IMR-90 (cell line): ENCODE measurements at regions of chr4 and their contacts with region 1.

Region 1: DNA sequence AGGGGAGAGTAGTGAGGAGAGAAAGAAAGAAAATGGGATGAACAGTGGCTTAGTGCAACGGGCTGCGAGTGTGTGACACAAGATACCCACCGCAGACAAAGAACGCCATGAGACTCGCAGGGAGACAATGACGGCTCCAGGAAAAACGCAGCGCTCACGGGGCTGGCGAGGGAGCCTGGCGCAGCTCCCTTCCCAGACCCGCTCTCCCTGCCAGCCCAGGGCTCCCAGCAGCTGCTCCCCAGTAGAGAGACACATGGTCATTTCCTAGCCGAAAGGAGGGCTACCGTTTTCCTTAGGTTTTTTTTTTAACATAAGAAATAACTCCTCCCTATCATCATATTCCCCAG is 149.5 kb downstream of the MAML3 start:
- DNase-seq: peak; percentile 51
- ATAC-seq: peak; percentile 86
- H3K4me3 ChIP-seq: peak overlapping the region; percentile 22
- H3K27ac ChIP-seq: no peak overlapping the region
- H3K4me1 ChIP-seq: peaks cover 2% of the 10 kb centered on the region; the same call in 1 of the 2 replicates
- H3K27me3 ChIP-seq: no peaks in the 10 kb centered on the region
- CTCF ChIP-seq: no peak
- POLR2A ChIP-seq: no peak
- RAD21 ChIP-seq: peak; percentile 16; the same call in 1 of the 2 replicates

Region 2: DNA sequence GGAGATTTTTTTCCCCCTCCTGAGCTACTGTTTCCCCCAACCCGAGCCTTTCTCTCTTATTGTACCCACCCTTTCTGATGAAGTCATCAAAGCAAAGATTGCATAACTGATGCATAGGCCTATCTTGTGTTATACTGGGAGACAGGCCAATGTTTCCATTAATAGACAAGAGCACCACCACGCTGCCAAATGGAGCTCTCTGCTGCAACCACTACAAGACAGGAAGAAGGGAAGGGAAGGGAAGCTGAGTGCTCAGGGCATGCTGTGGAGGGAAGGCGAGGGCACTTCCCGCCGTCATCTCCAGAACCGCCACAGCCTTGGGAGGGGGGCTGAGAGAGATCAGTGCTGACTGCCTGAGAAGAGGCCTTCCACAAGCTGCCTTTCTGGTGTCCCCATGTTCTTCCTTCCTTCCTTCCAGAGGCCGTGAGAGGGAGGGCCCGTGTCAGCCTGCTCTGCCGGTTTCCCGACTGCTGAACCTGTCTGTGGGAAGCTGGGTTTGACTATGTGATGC is 263.9 kb before region 1 on chr4:
- CTCF ChIA-PET with region 1: interaction called, 4 read pairs
- POLR2A ChIA-PET with region 1: no interaction called
- dilution Hi-C with region 1: no loop called
- in situ Hi-C with region 1: loop called (anchors 5 kb)
- intact Hi-C with region 1: no loop called
- DNase-seq: peak; percentile 97
- ATAC-seq: peak; percentile 94
- H3K4me3 ChIP-seq: no peak overlapping the region
- H3K27ac ChIP-seq: peak overlapping the region; percentile 45
- H3K4me1 ChIP-seq: peaks cover 8% of the 10 kb centered on the region
- H3K27me3 ChIP-seq: no peaks in the 10 kb centered on the region
- CTCF ChIP-seq: peak; percentile 43
- POLR2A ChIP-seq: no peak
- RAD21 ChIP-seq: peak; percentile 45

Region 3: DNA sequence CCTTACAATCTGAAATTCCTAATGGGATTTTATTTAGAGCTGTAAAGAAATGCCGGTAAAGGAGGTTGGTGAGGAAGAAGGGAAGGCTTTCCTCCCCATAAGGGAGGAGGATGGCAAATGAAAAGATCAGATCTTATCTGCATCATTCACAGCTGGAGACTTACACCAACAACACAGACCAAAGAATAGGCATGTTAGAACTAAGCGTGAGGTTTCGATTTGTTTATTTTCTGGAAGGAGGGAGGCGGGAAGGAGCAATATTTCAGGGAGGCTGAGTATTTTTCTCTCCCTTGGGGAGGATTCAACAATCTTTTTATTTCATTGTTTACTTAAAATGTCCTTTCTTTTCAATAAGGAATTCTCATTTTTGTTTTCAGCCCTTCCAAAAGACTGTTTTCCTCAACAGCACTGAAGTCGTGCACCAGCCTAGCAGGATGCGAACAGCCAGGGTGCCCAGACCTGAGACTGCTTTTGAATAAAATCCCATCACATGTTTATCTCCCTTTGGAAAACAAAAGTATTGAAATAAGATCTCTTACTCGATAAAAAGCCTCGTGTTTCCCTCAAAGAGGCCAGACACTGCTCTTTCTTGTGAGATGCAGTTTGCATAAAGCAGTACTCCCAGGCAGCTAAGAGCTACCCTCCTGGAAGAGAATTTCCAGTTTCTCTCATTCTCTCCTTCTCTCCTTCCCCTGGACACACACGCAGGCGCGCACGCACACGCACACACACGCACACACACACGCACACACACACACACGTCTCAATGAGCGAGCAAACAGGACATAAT is 102.8 kb before region 1 on chr4:
- CTCF ChIA-PET with region 1: no interaction called
- POLR2A ChIA-PET with region 1: no interaction called
- dilution Hi-C with region 1: no loop called
- in situ Hi-C with region 1: no loop called
- intact Hi-C with region 1: loop called (anchors 5 kb)
- DNase-seq: peak; percentile 44
- ATAC-seq: peak; percentile 68
- H3K4me3 ChIP-seq: peak overlapping the region; percentile 38
- H3K27ac ChIP-seq: peak overlapping the region; percentile 26; the same call in 1 of the 2 replicates
- H3K4me1 ChIP-seq: peaks cover 4% of the 10 kb centered on the region
- H3K27me3 ChIP-seq: no peaks in the 10 kb centered on the region
- CTCF ChIP-seq: no peak
- POLR2A ChIP-seq: no peak
- RAD21 ChIP-seq: no peak

Region 4: DNA sequence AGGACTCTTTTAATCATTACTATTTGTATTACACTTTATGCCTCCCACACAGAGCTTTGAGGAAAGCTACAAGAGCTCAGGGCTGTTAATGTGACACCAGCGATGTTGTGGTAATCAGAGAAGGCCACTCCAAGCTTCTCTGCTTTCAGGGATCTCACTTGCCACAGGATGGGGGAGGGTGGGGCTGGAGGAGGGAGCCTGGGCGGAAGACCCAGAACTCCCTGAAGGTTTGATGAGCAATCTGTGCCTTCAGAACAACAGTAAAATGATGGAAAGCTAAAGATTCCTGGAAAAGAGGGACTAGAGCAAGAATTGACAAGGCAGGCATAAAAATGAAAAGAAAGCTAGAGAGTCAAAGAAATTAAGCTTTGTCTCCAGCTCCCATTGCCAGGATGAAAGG is 73.8 kb after region 1 on chr4:
- CTCF ChIA-PET with region 1: no interaction called
- POLR2A ChIA-PET with region 1: no interaction called
- dilution Hi-C with region 1: no loop called
- in situ Hi-C with region 1: no loop called
- intact Hi-C with region 1: no loop called
- DNase-seq: peak; percentile 51
- ATAC-seq: peak; percentile 69
- H3K4me3 ChIP-seq: no peak overlapping the region
- H3K27ac ChIP-seq: peak overlapping the region; percentile 50; the same call in 1 of the 2 replicates
- H3K4me1 ChIP-seq: peaks cover 25% of the 10 kb centered on the region
- H3K27me3 ChIP-seq: no peaks in the 10 kb centered on the region
- CTCF ChIP-seq: no peak
- POLR2A ChIP-seq: no peak
- RAD21 ChIP-seq: no peak

Region 5: GRCh38 chr4:140996766-140997165 is 992.2 kb after region 1 on chr4:
- CTCF ChIA-PET with region 1: no interaction called
- POLR2A ChIA-PET with region 1: no interaction called
- dilution Hi-C with region 1: no loop called
- in situ Hi-C with region 1: no loop called
- intact Hi-C with region 1: no loop called
- DNase-seq: peak; percentile 78
- ATAC-seq: peak; percentile 86
- H3K4me3 ChIP-seq: no peak overlapping the region
- H3K27ac ChIP-seq: no peak overlapping the region
- H3K4me1 ChIP-seq: peaks cover 2% of the 10 kb centered on the region; the same call in 1 of the 2 replicates
- H3K27me3 ChIP-seq: no peaks in the 10 kb centered on the region
- CTCF ChIP-seq: peak; percentile 48
- POLR2A ChIP-seq: no peak
- RAD21 ChIP-seq: peak; percentile 48